ENCODE measurements at regions of chr1 and their contacts with region 1.

Region 1: DNA sequence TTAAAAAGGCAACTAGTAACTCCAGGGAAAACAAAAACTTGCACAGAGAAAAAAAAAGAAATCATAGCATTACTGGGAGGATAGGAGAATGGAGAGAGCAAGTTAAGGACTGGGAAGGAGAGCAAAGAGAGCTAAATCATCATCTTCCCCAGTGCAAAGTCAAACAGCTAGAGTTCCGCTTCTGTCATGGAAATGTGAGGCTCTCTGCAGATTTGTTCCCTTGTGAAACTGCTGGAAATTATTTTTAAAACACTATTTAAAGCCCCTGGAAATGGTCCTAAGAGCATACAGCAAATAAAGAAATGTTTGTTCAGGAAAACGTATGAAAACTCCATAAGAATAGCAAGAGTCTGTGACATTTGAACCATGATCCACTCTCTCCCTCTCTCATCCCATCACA is 64.6 kb downstream of the CAMK2N1 start:
- DNase-seq: no peak
- H3K4me3 ChIP-seq: no peak overlapping the region
- H3K27ac ChIP-seq: no peak overlapping the region
- H3K4me1 ChIP-seq: no peaks in the 10 kb centered on the region
- H3K27me3 ChIP-seq: peaks cover 38% of the 10 kb centered on the region
- CTCF ChIP-seq: no peak

Region 2: DNA sequence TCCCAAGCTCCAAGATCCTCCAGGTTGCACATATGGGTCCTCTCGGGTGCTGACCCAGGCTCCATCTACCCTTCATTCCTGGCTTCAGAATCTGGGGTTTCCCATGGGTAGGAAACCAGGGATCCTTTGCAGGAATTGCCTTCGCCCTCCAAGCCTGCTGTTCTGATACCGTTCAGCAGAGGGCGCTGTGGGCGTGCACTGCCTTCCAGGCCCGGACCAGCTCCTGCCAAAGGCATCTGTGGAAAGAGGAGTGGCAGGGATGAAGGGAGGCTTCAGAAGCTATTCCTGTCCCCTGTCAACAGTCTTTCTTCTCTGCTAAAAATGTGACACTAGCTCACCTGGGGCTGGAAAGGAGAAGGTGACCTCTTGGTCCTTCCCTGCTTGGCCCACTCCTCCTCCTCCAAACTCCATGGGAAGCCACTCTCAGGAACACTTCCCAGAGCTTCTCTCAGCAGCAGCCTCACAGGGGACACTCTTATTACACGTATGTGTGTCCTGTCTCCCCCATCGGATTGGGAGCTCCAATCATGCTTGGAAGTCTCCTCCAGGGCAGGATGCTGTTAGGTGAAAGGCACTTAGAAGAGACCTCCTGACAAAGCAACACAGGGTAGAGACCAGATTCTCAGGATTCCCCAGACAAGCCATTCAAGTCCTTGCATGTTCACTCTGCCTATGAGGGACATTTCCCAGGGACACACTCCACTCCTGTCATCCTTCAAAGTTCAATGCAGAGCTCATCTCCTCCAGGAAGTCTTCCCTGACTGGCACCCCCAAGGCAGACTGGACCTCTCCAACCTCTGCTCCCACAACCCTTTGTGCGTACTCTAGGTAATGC is 59.4 kb before region 1 on chr1:
- intact Hi-C with region 1: no loop called
- DNase-seq: peak; percentile 65
- H3K4me3 ChIP-seq: no peak overlapping the region
- H3K27ac ChIP-seq: no peak overlapping the region
- H3K4me1 ChIP-seq: peaks cover 40% of the 10 kb centered on the region
- H3K27me3 ChIP-seq: peaks cover 55% of the 10 kb centered on the region
- CTCF ChIP-seq: peak; percentile 82

Region 3: DNA sequence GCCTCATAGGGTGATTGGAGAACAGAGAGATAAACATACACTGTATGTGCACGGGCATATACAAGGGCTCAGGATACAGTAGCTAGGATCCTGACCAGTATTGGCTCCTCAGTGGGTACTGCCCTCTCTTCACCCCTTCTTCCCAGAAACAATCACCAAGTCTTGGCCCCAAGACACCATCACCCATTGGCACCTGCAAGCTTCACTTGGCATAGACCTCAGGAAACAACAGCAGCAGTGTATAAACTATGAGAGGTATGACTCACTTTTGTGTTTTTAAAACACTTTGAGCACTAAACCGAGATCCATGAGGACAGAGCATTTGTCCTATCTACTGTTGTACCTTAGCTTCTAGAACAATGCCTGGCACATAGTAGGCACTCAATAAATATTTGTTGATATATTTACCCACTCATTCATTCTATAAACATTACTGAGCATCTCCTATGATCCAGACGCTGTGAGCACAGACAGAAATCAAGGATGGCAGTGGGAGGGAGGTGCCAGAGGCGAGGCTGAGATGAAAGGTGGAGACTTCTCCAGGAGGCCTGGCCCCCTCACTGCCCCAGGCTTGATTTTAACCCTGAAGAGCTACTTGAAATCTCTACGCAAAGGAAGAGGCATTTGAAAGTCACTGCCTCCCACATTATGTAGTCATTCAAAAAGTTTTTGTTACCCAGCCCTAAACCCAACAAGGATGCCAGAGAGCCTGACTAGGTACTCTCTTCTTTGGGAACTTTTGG is 30.7 kb before region 1 on chr1:
- intact Hi-C with region 1: loop called (anchors 2 kb)
- DNase-seq: no peak
- H3K4me3 ChIP-seq: no peak overlapping the region
- H3K27ac ChIP-seq: no peak overlapping the region
- H3K4me1 ChIP-seq: no peaks in the 10 kb centered on the region
- H3K27me3 ChIP-seq: peaks cover 80% of the 10 kb centered on the region
- CTCF ChIP-seq: no peak